AG04449 (cell line): ENCODE measurements at regions of chr7 and their contacts with region 1.

Region 1: GRCh38 chr7:1473864-1474512 is 14.7 kb upstream of the MICALL2 start:
- DNase-seq: no peak
- H3K4me3 ChIP-seq: no peak overlapping the region
- CTCF ChIP-seq: peak; percentile 97

Region 2: GRCh38 chr7:1193593-1194424 is 280.2 kb before region 1 on chr7:
- CTCF ChIA-PET with region 1: interaction called, 40 read pairs
- POLR2A ChIA-PET with region 1: no interaction called
- DNase-seq: no peak
- H3K4me3 ChIP-seq: no peak overlapping the region
- CTCF ChIP-seq: peak; percentile 73

Region 3: DNA sequence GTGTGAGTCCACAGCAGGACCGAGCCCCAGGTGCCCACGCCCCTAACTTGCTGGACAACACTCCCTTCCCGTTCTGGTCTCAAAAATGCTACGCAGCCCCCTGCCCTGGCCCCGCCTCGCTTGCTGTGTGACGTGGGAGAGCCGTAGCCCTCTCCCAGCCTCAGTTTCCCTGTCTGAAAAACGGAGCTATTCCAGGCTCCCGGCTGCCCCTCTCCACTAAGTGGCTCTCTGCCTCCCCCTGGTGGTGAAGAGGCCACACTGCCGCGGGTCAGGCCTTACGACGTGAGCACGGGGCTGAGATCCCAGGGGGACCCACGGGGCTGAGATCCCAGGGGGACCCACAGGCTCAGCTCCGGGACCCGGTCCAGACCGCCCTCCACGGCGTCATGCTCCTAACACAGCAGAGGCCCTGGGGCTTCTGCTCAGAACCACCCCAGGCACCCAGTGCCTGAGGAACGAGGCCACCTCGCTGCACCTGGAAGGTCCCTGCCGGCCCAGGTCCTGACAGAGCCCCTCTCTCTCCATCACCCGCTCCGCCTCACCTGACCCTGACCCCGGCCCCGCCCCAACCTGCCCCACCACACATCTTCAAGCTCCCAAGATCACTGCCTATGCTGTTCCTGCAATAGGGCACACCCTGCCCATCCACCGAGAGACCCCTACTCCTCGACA is 41.4 kb before region 1 on chr7:
- CTCF ChIA-PET with region 1: interaction called, 14 read pairs
- POLR2A ChIA-PET with region 1: no interaction called
- DNase-seq: no peak
- H3K4me3 ChIP-seq: no peak overlapping the region
- CTCF ChIP-seq: peak; percentile 98

Region 4: DNA sequence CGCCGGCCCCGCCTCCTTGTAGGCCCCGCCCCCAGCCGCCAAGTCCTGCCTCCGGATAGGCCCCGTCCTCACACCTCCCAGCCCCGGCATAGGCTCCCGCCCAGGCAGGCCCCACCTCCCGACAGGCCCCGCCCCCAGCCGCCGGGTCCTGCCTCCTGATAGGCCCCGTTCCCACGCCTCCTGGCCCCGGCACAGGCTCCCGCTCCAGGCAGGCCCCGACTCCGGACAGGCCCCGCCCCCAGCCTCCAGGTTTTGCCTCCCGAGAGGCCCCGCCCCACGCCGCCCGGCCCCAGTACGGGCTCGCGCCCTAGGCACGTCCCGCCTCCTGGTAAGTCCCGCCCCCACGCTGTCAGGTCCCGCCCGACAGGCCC is 14.5 kb before region 1 on chr7:
- CTCF ChIA-PET with region 1: interaction called, 69 read pairs
- POLR2A ChIA-PET with region 1: interaction called, 4 read pairs
- DNase-seq: peak; percentile 81
- H3K4me3 ChIP-seq: peak overlapping the region; percentile 87
- CTCF ChIP-seq: no peak

Region 5: GRCh38 chr7:1493129-1493528 is 19.1 kb after region 1 on chr7:
- CTCF ChIA-PET with region 1: interaction called, 28 read pairs
- POLR2A ChIA-PET with region 1: no interaction called
- DNase-seq: no peak
- H3K4me3 ChIP-seq: no peak overlapping the region
- CTCF ChIP-seq: no peak